ENCODE measurements at regions of chr4 and their contacts with region 1.

Region 1: DNA sequence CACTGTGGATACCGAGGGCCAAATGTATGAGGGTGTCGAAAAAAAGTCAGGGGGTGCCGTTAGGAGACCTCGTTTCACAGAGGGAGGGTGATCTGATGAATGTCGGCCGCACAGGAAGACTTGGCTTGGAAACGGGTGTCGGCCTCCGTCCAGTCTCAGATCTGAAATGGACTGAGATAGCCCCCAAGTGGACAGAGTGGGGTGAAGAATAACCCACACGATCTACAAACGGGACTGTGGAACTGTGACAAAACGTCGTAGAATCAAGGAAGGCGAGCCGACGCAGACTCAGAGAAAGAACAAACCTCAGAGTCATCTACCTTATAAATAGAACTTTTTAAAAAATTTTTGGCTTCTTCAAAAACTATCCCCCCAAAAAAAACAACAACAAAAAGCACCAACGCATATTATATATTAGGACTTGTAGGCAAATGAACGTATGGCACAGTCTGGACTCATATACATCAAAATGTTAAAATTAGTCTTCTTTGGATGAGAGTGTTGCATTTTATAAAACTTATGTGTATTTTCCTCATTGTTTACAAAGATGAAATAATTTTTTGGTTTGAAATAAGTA is 63.8 kb upstream of the IRF2 start:
- DNase-seq: peak; percentile 94
- H3K4me3 Mint-ChIP-seq: peak overlapping the region; percentile 93
- H3K27ac Mint-ChIP-seq: peak overlapping the region; percentile 99
- H3K4me1 Mint-ChIP-seq: peaks cover 18% of the 10 kb centered on the region
- H3K27me3 Mint-ChIP-seq: no peaks in the 10 kb centered on the region
- CTCF ChIP-seq: peak; percentile 66

Region 2: DNA sequence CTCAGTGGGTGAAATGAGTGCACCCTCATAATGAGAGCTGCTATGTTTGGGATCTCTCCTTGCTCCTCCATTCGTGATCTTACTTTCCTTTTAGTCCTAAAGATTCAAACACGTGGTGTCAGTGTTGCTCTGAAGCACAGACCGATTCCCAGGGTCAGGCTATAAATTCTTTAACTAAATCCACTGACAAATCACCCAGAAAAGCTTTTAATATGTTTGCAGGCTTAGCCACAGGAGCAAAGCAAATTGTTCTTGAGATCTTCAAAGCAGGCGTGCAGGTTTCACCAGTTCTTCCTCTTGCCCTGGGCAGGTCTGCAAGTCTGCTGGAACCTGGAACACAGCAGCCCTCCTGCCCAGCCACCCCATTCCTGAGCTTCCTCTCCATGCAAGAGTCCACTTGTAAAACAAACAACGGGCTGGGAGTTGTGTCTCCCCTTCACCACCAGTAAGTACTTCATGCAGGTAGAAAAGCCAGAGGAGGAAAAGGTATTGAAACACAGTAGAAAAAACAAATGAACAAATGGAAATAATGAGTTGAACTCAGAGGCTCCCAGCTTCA is 250.3 kb before region 1 on chr4:
- CTCF ChIA-PET with region 1: interaction called, 3 read pairs
- POLR2A ChIA-PET with region 1: interaction called, 5 read pairs
- intact Hi-C with region 1: loop called (anchors 1 kb)
- DNase-seq: peak; percentile 43
- H3K4me3 Mint-ChIP-seq: no peak overlapping the region
- H3K27ac Mint-ChIP-seq: no peak overlapping the region
- H3K4me1 Mint-ChIP-seq: no peaks in the 10 kb centered on the region
- H3K27me3 Mint-ChIP-seq: no peaks in the 10 kb centered on the region
- CTCF ChIP-seq: no peak

Region 3: GRCh38 chr4:184400375-184400870 is 137.7 kb before region 1 on chr4:
- CTCF ChIA-PET with region 1: no interaction called
- POLR2A ChIA-PET with region 1: interaction called, 9 read pairs
- intact Hi-C with region 1: loop called (anchors 1 kb)
- DNase-seq: peak; percentile 95
- H3K4me3 Mint-ChIP-seq: peak overlapping the region; percentile 50
- H3K27ac Mint-ChIP-seq: peak overlapping the region; percentile 88
- H3K4me1 Mint-ChIP-seq: peaks cover 31% of the 10 kb centered on the region
- H3K27me3 Mint-ChIP-seq: no peaks in the 10 kb centered on the region
- CTCF ChIP-seq: no peak

Region 4: GRCh38 chr4:184514121-184514988 is 23.8 kb before region 1 on chr4:
- CTCF ChIA-PET with region 1: no interaction called
- POLR2A ChIA-PET with region 1: interaction called, 25 read pairs
- intact Hi-C with region 1: no loop called
- DNase-seq: peak; percentile 53
- H3K4me3 Mint-ChIP-seq: no peak overlapping the region
- H3K27ac Mint-ChIP-seq: no peak overlapping the region
- H3K4me1 Mint-ChIP-seq: no peaks in the 10 kb centered on the region
- H3K27me3 Mint-ChIP-seq: no peaks in the 10 kb centered on the region
- CTCF ChIP-seq: no peak

Region 5: GRCh38 chr4:184649026-184649970 is 111.2 kb after region 1 on chr4 and contains the starts of genes CASP3 and PRIMPOL:
- CTCF ChIA-PET with region 1: no interaction called
- POLR2A ChIA-PET with region 1: interaction called, 13 read pairs
- intact Hi-C with region 1: no loop called
- DNase-seq: peak; percentile 94
- H3K4me3 Mint-ChIP-seq: peak within 1 kb of the TSS; percentile 81
- H3K27ac Mint-ChIP-seq: peak within 1 kb of the TSS; percentile 78
- H3K4me1 Mint-ChIP-seq: peaks cover 37% of the 10 kb centered on the region
- H3K27me3 Mint-ChIP-seq: no peaks in the 10 kb centered on the region
- CTCF ChIP-seq: no peak
- total RNA-seq, gene CASP3: 27.4 and 28.6 TPM in 2 replicates
- total RNA-seq, gene PRIMPOL: 19.2 and 20.7 TPM in 2 replicates